ENCODE measurements at regions of chr12 and their contacts with region 1.

Region 1: GRCh38 chr12:1939801-1940607 is 21.6 kb upstream of the CACNA2D4 start:
- DNase-seq: peak; percentile 77 to 92
- H3K4me3 ChIP-seq: no peak overlapping the region
- H3K4me1 ChIP-seq: peaks cover 4% of the 10 kb centered on the region; the same call in 1 of the 2 replicates
- H3K27me3 ChIP-seq: no peaks in the 10 kb centered on the region

Region 2: DNA sequence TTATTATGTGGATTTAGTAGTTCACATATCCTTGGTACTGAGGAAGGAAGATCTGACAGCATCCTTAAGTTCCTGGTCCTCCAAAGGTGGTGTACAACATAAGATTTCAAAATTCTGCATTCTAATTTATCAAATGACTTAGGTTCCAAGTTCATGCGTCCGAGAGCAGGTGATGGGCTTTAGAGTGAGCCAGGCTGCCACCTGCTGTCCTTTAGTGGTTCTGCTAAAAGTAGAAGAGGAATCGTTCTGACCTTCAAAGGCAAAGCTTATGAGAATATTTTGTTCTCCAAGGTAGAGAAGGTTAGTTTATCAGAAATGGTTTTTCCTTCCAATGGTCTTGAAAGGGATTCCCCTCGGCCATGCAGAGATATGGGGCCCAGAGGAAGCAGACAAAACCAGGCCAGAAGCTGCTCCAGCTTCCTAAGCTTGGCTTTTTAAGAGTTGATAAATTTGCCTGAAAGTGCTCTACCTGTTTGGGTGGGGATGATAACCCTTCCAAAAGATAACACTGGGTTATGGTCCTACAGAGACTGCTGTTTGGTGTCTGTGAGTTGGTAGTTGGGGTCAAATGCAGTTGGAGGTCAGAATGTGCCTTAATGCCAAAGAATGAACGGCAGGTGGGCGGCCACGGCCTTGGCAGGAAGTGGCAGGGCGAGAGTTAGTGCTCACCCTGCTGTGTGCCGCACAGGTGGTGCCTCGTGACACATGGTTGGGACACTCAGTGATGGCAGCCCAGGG is 148.7 kb before region 1 on chr12:
- in situ Hi-C with region 1: loop called (anchors 5 kb)
- DNase-seq: peak; percentile 49 to 74
- H3K4me3 ChIP-seq: no peak overlapping the region
- H3K4me1 ChIP-seq: peaks cover 4% of the 10 kb centered on the region
- H3K27me3 ChIP-seq: no peaks in the 10 kb centered on the region

Region 3: DNA sequence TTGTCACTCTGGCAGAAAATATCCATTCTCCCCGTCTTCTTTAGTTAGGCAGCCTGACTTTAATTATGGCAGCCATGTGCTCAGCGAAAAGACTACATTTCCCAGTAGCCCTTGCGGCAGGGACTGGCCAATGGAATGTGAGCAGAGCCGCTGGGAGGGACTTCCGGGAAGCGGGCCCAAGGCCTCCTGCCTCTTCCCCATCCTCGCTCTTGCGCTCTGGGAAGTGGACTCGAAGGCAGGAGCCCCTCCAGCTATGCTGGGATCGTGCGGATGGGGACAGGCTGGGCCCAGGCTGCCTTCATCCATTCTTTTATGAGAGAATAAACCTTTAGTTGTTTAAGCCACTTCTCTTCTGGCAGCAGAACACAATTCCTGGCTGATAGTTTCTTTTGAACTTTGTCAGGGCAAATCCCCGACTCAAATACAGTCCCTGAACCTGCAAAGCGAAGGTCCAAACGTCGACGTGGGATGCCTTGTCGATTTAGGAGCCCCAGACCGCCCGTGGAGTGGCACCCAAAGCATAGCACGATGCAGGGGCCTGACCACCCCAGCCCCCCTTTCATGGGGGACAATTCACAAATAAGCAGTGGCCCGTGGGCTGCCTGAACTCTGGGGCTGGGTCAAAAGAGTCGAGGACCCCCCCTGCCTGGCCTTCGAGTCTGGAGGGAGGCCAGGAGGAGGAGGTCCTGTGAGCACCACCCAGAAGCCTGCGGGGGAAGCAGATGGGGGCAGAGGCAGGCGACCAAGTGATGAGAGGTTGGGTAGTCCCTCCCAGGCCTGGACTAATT is 135.3 kb before region 1 on chr12:
- in situ Hi-C with region 1: no loop called
- DNase-seq: peak; percentile 85 to 94
- H3K4me3 ChIP-seq: no peak overlapping the region
- H3K4me1 ChIP-seq: peaks cover 4% of the 10 kb centered on the region; the same call in 1 of the 2 replicates
- H3K27me3 ChIP-seq: no peaks in the 10 kb centered on the region